CD8-positive, alpha-beta T cell (primary cell): ENCODE measurements at regions of chr15 and their contacts with region 1.

Region 1: DNA sequence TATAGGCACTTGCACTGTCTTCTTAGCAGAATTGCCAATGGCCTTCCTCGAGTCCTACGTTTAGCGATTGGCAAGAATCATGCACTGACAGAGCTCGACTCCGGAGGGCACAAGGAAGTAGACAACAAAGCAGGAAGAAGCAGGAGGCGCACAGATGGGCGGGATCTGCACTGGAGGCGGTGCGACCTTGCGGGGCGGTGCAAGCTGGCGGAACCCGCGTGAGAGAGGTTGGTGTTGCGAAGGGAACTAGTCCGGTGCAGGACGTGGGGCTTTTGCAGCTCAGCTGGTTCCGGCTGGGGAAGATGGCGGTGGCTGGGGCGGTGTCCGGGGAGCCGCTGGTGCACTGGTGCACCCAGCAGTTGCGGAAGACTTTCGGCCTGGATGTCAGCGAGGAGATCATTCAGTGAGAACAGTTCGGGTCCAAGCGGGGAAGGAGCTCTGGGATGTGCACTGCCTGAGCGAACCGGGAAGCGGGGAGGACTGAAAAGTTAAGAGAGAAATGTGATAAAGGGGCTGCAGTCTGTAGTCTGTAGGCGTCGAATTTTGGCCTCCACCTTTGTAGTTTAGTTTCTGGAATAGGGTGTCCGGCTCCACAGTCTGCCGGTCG is at the start of gene TRIP4:
- DNase-seq: peak; percentile 93 to 98 (median 96)
- ATAC-seq: peak; percentile 99
- H3K4me3 ChIP-seq: peak within 1 kb of the TSS; percentile 86 to 98
- H3K4me3 Mint-ChIP-seq: peak within 1 kb of the TSS; percentile 99
- H3K27ac ChIP-seq: peak within 1 kb of the TSS; percentile 51 to 69
- H3K27ac Mint-ChIP-seq: peak within 1 kb of the TSS; percentile 97
- H3K4me1 ChIP-seq: peaks cover 19% of the 10 kb centered on the region
- H3K4me1 Mint-ChIP-seq: peaks cover 21% of the 10 kb centered on the region
- H3K27me3 ChIP-seq: no peaks in the 10 kb centered on the region
- H3K27me3 Mint-ChIP-seq: no peaks in the 10 kb centered on the region
- CTCF ChIP-seq: no peak
- total RNA-seq, gene TRIP4: 10.7 to 11.2 TPM

Region 2: GRCh38 chr15:64702816-64703646 is 315.4 kb after region 1 on chr15:
- CTCF ChIA-PET with region 1: no interaction called
- POLR2A ChIA-PET with region 1: no interaction called
- intact Hi-C with region 1: loop called in 1 of 2 experiments (anchors 1 kb)
- DNase-seq: peak; percentile 90 to 97 (median 95)
- ATAC-seq: peak; percentile 95
- H3K4me3 ChIP-seq: peak overlapping the region; percentile 79 to 86
- H3K4me3 Mint-ChIP-seq: peak overlapping the region; percentile 91
- H3K27ac ChIP-seq: peak overlapping the region; percentile 60 to 66
- H3K27ac Mint-ChIP-seq: peak overlapping the region; percentile 92
- H3K4me1 ChIP-seq: peaks cover 47% of the 10 kb centered on the region
- H3K4me1 Mint-ChIP-seq: peaks cover 51% of the 10 kb centered on the region
- H3K27me3 ChIP-seq: no peaks in the 10 kb centered on the region
- H3K27me3 Mint-ChIP-seq: no peaks in the 10 kb centered on the region
- CTCF ChIP-seq: no peak

Region 3: DNA sequence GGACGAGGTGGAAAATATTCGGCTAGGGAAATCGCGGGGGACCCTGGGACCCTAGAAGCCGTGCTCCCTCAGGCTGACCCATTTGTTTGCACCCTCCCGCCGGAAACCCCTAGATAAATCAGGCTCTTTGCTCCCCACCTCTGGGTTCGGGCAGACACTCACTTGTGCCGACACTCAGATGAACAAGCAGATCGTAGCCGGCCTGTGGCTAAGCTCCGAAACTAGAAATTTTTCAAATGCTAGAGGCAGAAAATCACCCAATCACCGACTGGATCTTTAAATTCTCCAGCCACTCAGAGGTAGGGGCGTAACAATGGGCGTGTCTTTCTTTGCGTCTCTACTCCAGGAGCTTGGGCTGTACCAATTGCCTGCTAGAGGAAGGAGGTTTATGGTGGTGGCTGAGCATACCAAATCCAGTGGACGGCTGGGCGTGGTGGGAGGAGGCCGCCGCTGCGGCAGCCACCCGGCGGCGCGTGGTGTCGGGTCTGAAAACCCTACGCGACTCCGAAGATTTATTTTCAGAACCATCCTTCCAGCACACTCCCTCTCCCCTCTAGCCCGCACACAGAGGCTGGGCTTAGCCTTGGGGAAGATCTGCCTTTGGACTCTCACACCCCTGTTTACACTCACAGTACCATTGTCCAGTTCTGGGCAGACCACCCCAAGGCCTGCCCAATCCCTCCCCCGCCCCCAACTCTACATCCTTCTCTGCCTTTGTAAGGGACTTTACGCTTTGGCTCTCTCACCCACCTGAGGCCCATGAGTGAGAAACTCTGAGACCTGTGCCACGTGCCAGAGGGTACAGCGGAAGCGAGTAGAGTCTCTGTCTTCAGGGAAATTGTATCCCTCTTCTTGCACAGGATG is 438.0 kb after region 1 on chr15 and contains the start of gene PIF1:
- CTCF ChIA-PET with region 1: no interaction called
- POLR2A ChIA-PET with region 1: no interaction called
- intact Hi-C with region 1: loop called in 1 of 2 experiments (anchors 5 kb)
- DNase-seq: peak; percentile 67 to 97 (median 84)
- ATAC-seq: peak; percentile 97
- H3K4me3 ChIP-seq: peak within 1 kb of the TSS; percentile 41 to 47
- H3K4me3 Mint-ChIP-seq: peak within 1 kb of the TSS; percentile 88
- H3K27ac ChIP-seq: peak within 1 kb of the TSS in 1 of 2 experiments; percentile 64
- H3K27ac Mint-ChIP-seq: peak within 1 kb of the TSS; percentile 70
- H3K4me1 ChIP-seq: peaks cover 23% of the 10 kb centered on the region
- H3K4me1 Mint-ChIP-seq: peaks cover 32% of the 10 kb centered on the region
- H3K27me3 ChIP-seq: no peaks in the 10 kb centered on the region
- H3K27me3 Mint-ChIP-seq: peaks cover 14% of the 10 kb centered on the region
- CTCF ChIP-seq: no peak
- total RNA-seq, gene PIF1: 0.50 to 0.76 TPM

Region 4: DNA sequence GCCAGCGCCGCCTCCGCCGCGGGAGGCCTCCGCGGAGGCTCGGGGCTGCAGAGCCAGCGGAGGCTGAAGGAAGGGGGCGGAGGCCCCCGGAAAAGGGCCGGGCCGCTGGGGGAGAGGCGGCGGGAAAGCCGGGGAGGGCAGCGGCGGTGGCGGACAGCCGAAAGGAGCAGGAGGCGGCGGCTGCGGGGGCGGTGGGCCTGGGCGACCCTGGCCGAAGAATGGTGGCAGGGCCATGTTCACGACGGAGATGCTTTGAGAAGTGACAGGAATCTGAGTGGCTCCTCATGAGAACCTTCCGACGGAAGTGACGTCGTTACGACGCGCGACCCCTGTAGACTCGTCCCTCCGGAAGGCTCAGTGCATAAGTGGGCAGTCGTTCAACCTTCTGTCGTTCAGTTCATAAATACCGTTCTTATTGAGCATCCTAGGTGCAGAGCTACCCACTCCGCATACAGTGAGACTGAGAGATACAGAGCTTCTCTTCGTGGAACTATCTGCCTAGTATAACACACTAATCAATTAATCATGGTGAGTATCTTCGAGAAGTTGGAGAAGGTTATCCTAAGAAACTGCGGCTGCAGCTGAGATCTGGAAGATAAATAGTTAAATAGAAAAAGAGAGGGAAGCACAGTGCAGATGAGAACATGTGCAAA is 746.0 kb after region 1 on chr15 and contains the start of gene PDCD7:
- CTCF ChIA-PET with region 1: no interaction called
- POLR2A ChIA-PET with region 1: interaction called, 4 read pairs
- intact Hi-C with region 1: loop called in 1 of 2 experiments (anchors 10 kb)
- DNase-seq: peak; percentile 60 to 95 (median 86)
- ATAC-seq: peak; percentile 93
- H3K4me3 ChIP-seq: peak within 1 kb of the TSS; percentile 62 to 78
- H3K4me3 Mint-ChIP-seq: peak within 1 kb of the TSS; percentile 91
- H3K27ac ChIP-seq: peak within 1 kb of the TSS; percentile 80 to 83
- H3K27ac Mint-ChIP-seq: peak within 1 kb of the TSS; percentile 96
- H3K4me1 ChIP-seq: peaks cover 26% of the 10 kb centered on the region
- H3K4me1 Mint-ChIP-seq: peaks cover 31% of the 10 kb centered on the region
- H3K27me3 ChIP-seq: no peaks in the 10 kb centered on the region
- H3K27me3 Mint-ChIP-seq: no peaks in the 10 kb centered on the region
- CTCF ChIP-seq: no peak
- total RNA-seq, gene PDCD7: 20.7 to 21.7 TPM